Left cardiac atrium (tissue), 4 donors: ENCODE measurements at regions of chrX and their contacts with region 1.

Region 1: DNA sequence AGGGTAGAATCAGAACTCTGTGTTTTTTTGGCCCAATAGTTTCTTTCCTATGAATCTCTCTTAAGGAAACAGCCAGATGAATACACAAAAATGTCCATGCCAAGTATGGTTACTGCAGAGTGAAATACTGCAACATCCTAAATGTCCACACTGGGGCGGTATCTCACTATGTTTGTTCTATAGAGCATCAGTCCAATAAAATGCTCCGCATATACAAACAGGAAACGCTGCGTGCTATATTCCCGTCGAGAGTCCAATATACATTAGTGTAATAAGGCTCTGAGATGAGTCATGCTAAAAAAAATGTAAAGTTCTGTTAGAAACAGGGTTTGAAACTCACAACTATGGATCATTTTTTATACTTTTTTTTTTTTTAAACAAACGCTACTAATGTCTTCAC is 72.9 kb upstream of the ENOX2 start:
- DNase-seq: no peak
- ATAC-seq: peak; percentile 23 to 63

Region 2: GRCh38 chrX:131063613-131064012 is 87.7 kb after region 1 on chrX:
- intact Hi-C with region 1: no loop called
- DNase-seq: no peak
- ATAC-seq: no peak

Region 3: DNA sequence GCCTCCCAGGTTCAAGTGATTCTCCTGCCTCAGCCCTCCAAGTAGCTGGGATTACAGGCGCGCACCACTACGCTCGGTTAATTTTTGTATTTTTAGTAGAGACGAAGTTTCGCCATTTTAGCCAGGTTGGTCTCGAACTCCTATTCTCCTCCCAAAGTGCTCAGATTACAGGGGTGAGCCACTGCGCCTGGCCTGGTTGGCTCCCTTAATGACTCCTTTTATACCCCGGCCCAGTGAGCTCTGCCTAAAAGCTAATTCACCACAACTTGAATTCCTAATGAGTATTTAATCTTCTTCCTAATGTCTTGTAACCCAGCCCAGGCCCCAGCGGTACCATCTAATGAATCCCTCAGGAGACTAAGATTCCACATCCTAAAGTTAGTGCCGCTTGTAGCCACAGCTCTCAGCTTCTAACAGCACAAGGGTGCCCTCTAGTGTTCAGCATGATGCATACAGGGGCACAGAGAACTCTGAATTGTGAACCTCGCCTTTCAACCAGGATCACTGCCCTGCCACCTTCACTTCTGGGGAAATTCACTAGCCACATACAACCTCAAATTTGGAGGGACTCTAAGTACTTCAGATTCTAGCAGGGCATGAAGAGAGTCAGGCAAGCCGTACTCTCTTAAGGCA is 657.5 kb after region 1 on chrX:
- intact Hi-C with region 1: loop called in 1 of 2 experiments (anchors 5 kb)
- DNase-seq: peak; percentile 41
- ATAC-seq: peak in 1 of 2 donors; percentile 50

Region 4: GRCh38 chrX:131677655-131678628 is 702.0 kb after region 1 on chrX:
- intact Hi-C with region 1: loop called in 1 of 2 experiments (anchors 2 kb)
- DNase-seq: peak; percentile 26
- ATAC-seq: no peak